Activated CD4-positive, alpha-beta T cell treated with anti-CD3 and anti-CD28 coated beads for 36 hours (primary cell): ENCODE measurements at regions of chr6 and their contacts with region 1.

Region 1: GRCh38 chr6:36985808-36986703 is at the start of gene MTCH1:
- DNase-seq: peak; percentile 93
- ATAC-seq: peak; percentile 80
- H3K4me3 Mint-ChIP-seq: no peak within 1 kb of the TSS
- H3K27ac Mint-ChIP-seq: peak within 1 kb of the TSS; percentile 95
- H3K4me1 Mint-ChIP-seq: peaks cover 18% of the 10 kb centered on the region
- H3K27me3 Mint-ChIP-seq: no peaks in the 10 kb centered on the region
- total RNA-seq, gene MTCH1: 72.9 to 92.9 TPM

Region 2: DNA sequence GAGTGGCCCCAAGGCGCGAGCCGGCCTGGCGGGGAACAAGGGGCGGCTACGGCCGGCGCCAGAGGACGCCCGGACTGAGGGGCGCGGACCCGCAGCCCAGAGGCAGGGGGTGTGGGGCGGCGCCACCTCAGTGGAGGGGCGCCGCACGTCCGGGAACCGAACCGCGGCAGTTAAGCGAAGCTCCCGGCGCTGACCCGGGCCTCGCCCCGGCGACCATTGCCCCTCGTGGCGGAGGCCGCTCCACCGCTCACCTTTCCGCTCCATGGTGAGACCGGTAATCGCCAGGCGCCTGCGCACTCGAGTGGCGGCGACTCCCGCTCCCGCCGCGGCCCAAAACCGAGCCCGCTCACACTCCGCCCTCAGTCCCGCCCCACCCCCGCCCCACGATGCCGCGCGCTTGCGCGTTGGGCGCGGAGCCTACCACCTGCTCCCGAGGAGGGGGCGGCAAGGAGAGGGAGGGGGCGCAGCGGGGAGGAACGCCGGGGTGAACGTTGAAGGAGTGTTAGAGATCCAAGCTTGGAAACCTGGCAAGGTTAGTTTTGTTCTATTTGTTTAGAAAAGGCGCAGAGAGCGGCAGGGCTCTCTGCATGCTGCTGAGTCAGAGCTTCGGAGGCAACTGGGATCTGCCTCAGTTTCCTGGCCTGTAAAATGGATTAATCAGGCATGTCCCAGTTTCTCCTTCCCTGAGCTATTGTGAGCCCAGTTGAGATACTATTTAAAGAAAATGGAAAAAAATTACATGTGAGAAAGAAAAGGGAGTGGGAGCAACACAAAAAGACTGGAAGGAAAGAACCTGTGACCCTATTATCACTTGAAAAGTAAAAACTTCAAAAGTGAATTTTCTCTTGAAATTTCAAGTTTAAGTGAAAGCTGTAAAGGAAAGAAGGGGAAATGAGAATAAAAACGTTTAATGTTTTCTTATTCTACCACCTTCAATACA is 1065.0 kb before region 1 on chr6 and contains the start of gene SRPK1:
- CTCF ChIA-PET with region 1: no interaction called
- POLR2A ChIA-PET with region 1: no interaction called
- intact Hi-C with region 1: loop called in 1 of 2 experiments (anchors 5 kb)
- DNase-seq: peak; percentile 94
- ATAC-seq: peak; percentile 80
- H3K4me3 Mint-ChIP-seq: peak within 1 kb of the TSS; percentile 95
- H3K27ac Mint-ChIP-seq: peak within 1 kb of the TSS; percentile 97
- H3K4me1 Mint-ChIP-seq: peaks cover 45% of the 10 kb centered on the region
- H3K27me3 Mint-ChIP-seq: no peaks in the 10 kb centered on the region
- total RNA-seq, gene SRPK1: 100 to 118 TPM

Region 3: DNA sequence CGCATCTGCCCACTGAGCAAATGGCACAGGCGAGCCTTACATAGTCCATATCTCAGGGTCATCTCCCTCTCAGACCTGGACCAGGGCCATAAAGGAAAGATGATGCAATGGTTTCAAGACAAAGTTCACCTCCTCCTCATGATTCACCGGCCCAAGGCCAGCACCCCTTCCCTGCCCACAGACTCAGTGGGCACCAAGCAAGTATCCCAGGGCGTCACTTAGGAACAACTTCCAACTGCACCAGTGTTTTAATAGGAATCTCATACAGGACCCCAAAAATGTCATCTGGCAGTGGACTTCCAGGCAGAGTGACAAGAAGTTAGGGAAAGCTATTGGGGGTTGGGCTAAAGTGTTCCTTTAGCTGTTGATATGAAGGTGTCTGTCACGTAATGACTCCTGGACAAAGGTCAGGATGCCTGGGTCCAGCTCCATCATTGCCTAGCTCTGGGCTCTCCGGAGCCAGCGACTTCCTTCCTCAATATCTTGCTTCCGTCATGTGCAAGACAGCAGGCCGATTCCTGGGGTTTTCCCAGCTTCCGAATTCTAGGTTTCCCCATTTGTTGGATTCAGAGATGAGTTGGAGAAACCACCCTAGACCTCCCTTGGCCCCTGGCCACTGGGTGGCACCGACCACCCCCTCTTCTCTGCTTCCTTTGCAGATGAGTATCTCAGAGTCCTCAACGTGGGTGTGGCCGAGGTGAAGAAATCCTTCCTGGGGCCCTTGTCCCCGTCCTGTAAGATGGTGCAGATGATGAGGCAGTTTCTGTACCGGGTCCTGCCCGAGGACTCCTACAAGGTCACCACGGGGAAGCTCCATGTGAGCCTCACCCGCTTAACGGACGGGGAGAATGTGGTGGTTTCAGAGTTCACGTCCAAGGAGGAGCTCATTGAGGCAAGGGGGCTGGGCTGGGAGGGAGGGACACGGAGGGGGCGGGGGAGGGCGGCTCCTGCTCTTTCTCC is 695.1 kb before region 1 on chr6:
- CTCF ChIA-PET with region 1: no interaction called
- POLR2A ChIA-PET with region 1: no interaction called
- intact Hi-C with region 1: no loop called
- DNase-seq: no peak
- ATAC-seq: no peak
- H3K4me3 Mint-ChIP-seq: no peak overlapping the region
- H3K27ac Mint-ChIP-seq: no peak overlapping the region
- H3K4me1 Mint-ChIP-seq: peaks cover 7% of the 10 kb centered on the region
- H3K27me3 Mint-ChIP-seq: peaks cover 1% of the 10 kb centered on the region

Region 4: GRCh38 chr6:36874443-36875249 is 111.4 kb before region 1 on chr6 and contains the start of gene PPIL1:
- CTCF ChIA-PET with region 1: interaction called, 4 read pairs
- POLR2A ChIA-PET with region 1: interaction called, 6 read pairs
- intact Hi-C with region 1: loop called in 1 of 2 experiments (anchors 1 kb)
- DNase-seq: peak; percentile 90
- ATAC-seq: peak; percentile 80
- H3K4me3 Mint-ChIP-seq: peak within 1 kb of the TSS; percentile 98
- H3K27ac Mint-ChIP-seq: peak within 1 kb of the TSS; percentile 99
- H3K4me1 Mint-ChIP-seq: peaks cover 45% of the 10 kb centered on the region
- H3K27me3 Mint-ChIP-seq: peaks cover 7% of the 10 kb centered on the region
- total RNA-seq, gene PPIL1: 45.9 to 46.0 TPM

Region 5: GRCh38 chr6:36912586-36912985 is 73.5 kb before region 1 on chr6:
- CTCF ChIA-PET with region 1: interaction called, 4 read pairs
- POLR2A ChIA-PET with region 1: interaction called, 4 read pairs
- intact Hi-C with region 1: loop called (anchors 1 to 2 kb)
- DNase-seq: peak; percentile 74
- ATAC-seq: peak; percentile 87
- H3K4me3 Mint-ChIP-seq: peak overlapping the region; percentile 37
- H3K27ac Mint-ChIP-seq: peak overlapping the region; percentile 83
- H3K4me1 Mint-ChIP-seq: peaks cover 44% of the 10 kb centered on the region
- H3K27me3 Mint-ChIP-seq: no peaks in the 10 kb centered on the region

Region 6: GRCh38 chr6:36962874-36963273 is 23.2 kb before region 1 on chr6:
- CTCF ChIA-PET with region 1: no interaction called
- POLR2A ChIA-PET with region 1: no interaction called
- intact Hi-C with region 1: loop called in 1 of 2 experiments (anchors 1 kb)
- DNase-seq: peak; percentile 88
- ATAC-seq: peak; percentile 84
- H3K4me3 Mint-ChIP-seq: peak overlapping the region; percentile 54
- H3K27ac Mint-ChIP-seq: peak overlapping the region; percentile 64
- H3K4me1 Mint-ChIP-seq: peaks cover 45% of the 10 kb centered on the region
- H3K27me3 Mint-ChIP-seq: no peaks in the 10 kb centered on the region

Region 7: GRCh38 chr6:37160922-37161778 is 175.1 kb after region 1 on chr6:
- CTCF ChIA-PET with region 1: no interaction called
- POLR2A ChIA-PET with region 1: no interaction called
- intact Hi-C with region 1: no loop called
- DNase-seq: no peak
- ATAC-seq: no peak
- H3K4me3 Mint-ChIP-seq: no peak overlapping the region
- H3K27ac Mint-ChIP-seq: no peak overlapping the region
- H3K4me1 Mint-ChIP-seq: peaks cover 16% of the 10 kb centered on the region
- H3K27me3 Mint-ChIP-seq: no peaks in the 10 kb centered on the region

Region 8: GRCh38 chr6:37257634-37258404 is 271.8 kb after region 1 on chr6 and contains the starts of genes TBC1D22B and TMEM217:
- CTCF ChIA-PET with region 1: no interaction called
- POLR2A ChIA-PET with region 1: interaction called, 4 read pairs
- intact Hi-C with region 1: loop called in 1 of 2 experiments (anchors 1 kb)
- DNase-seq: peak; percentile 98
- ATAC-seq: peak; percentile 99
- H3K4me3 Mint-ChIP-seq: peak within 1 kb of the TSS; percentile 74
- H3K27ac Mint-ChIP-seq: peak within 1 kb of the TSS; percentile 94
- H3K4me1 Mint-ChIP-seq: peaks cover 45% of the 10 kb centered on the region
- H3K27me3 Mint-ChIP-seq: no peaks in the 10 kb centered on the region
- total RNA-seq, gene TBC1D22B: 14.9 to 17.0 TPM
- total RNA-seq, gene TMEM217: 2.5 TPM